ENCODE measurements at regions of chr6 and their contacts with region 1.

Region 1: GRCh38 chr6:12011276-12012076 is 636 bp upstream of the HIVEP1 start:
- DNase-seq: peak; percentile 95
- ATAC-seq: peak; percentile 78
- H3K4me3 ChIP-seq: peak overlapping the region; percentile 90 to 97 (median 94); a peak in 4 of 6 replicates
- H3K27ac ChIP-seq: peak overlapping the region; percentile 91
- H3K4me1 ChIP-seq: peaks cover 31% of the 10 kb centered on the region
- H3K27me3 ChIP-seq: no peaks in the 10 kb centered on the region; a peak in 1 of 5 replicates
- CTCF ChIP-seq: no peak
- EP300 ChIP-seq: peak in 1 of 2 experiments; percentile 7; a peak in 1 of 4 replicates
- POLR2A ChIP-seq: peak; percentile 41 to 45; a peak in 3 of 4 replicates
- RAD21 ChIP-seq: no peak

Region 2: GRCh38 chr6:11537229-11538051 is 474.0 kb before region 1 on chr6 and contains the start of gene TMEM170B:
- CTCF ChIA-PET with region 1: no interaction called
- POLR2A ChIA-PET with region 1: no interaction called
- in situ Hi-C with region 1: no loop called
- intact Hi-C with region 1: loop called (anchors 10 kb)
- DNase-seq: peak; percentile 91
- ATAC-seq: peak; percentile 97
- H3K4me3 ChIP-seq: peak within 1 kb of the TSS; percentile 74 to 94 (median 94)
- H3K27ac ChIP-seq: peak within 1 kb of the TSS; percentile 71
- H3K4me1 ChIP-seq: peaks cover 37% of the 10 kb centered on the region
- H3K27me3 ChIP-seq: no peaks in the 10 kb centered on the region
- CTCF ChIP-seq: no peak
- EP300 ChIP-seq: no peak; a peak in 1 of 4 replicates
- POLR2A ChIP-seq: peak; percentile 38 to 71
- RAD21 ChIP-seq: peak; percentile 35; the same call in 1 of the 2 replicates
- total RNA-seq, gene TMEM170B: 9.4 and 14.3 TPM in 2 replicates

Region 3: GRCh38 chr6:12001004-12001705 is 10.3 kb before region 1 on chr6:
- CTCF ChIA-PET with region 1: no interaction called
- POLR2A ChIA-PET with region 1: interaction called, 10 read pairs
- in situ Hi-C with region 1: no loop called
- intact Hi-C with region 1: no loop called
- DNase-seq: peak; percentile 84
- ATAC-seq: peak; percentile 91
- H3K4me3 ChIP-seq: peak overlapping the region in 2 of 3 experiments; percentile 32 to 52; a peak in 3 of 6 replicates
- H3K27ac ChIP-seq: peak overlapping the region; percentile 60
- H3K4me1 ChIP-seq: peaks cover 30% of the 10 kb centered on the region
- H3K27me3 ChIP-seq: no peaks in the 10 kb centered on the region; a peak in 1 of 5 replicates
- CTCF ChIP-seq: no peak
- EP300 ChIP-seq: peak; percentile 66 to 75; a peak in 1 of 4 replicates
- POLR2A ChIP-seq: peak in 1 of 2 experiments; percentile 72; a peak in 1 of 4 replicates
- RAD21 ChIP-seq: no peak

Measured in HepG2 (cell line).